Gastrocnemius medialis (tissue), 4 donors: ENCODE measurements at regions of chr18 and their contacts with region 1.

Region 1: GRCh38 chr18:61901323-61901986 is 8.6 kb upstream of the RNF152 start:
- DNase-seq: no peak
- ATAC-seq: peak; percentile 56 to 80
- H3K4me3 ChIP-seq: no peak overlapping the region
- H3K27ac ChIP-seq: no peak overlapping the region
- H3K4me1 ChIP-seq: no peaks in the 10 kb centered on the region
- H3K27me3 ChIP-seq: no peaks in the 10 kb centered on the region
- CTCF ChIP-seq: peak; percentile 40 to 81 (median 63)
- POLR2A ChIP-seq: no peak

Region 2: DNA sequence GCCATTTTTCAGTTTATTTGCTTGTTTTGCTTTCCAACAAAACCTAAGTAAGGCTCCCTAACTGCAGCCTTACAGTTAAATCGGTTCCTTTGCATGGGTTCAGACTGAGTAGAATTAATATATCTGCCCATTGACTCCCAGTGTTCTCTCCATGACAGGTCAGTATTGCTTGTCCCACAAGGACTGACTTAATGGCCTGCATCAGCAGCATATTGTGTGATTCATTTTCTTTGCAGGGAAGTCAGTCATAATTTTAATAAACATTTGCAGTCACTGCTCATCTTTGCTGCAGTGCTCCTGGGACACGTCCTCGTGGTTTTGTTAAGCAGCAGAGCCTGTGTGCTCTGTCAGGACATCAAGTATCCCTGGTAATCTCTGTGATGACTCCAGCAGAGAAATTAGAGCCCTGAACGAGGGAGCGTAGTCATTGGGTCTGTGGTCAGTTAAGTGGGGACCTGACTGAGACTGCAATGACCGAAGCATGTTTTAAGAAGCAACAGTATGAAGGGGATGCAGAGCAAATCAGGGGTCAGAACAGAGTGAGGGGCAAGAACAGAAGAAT is 474.9 kb before region 1 on chr18:
- in situ Hi-C with region 1: no loop called
- intact Hi-C with region 1: no loop called
- DNase-seq: no peak
- ATAC-seq: no peak
- H3K4me3 ChIP-seq: no peak overlapping the region
- H3K27ac ChIP-seq: no peak overlapping the region
- H3K4me1 ChIP-seq: no peaks in the 10 kb centered on the region
- H3K27me3 ChIP-seq: no peaks in the 10 kb centered on the region
- CTCF ChIP-seq: no peak
- POLR2A ChIP-seq: no peak

Region 3: GRCh38 chr18:61635901-61636528 is 265.4 kb before region 1 on chr18:
- in situ Hi-C with region 1: loop called in 2 of 4 experiments (anchors 10 to 25 kb)
- intact Hi-C with region 1: no loop called
- DNase-seq: peak in 1 of 2 donors; percentile 13
- ATAC-seq: peak in 1 of 2 donors; percentile 36
- H3K4me3 ChIP-seq: no peak overlapping the region
- H3K27ac ChIP-seq: peak overlapping the region in 2 of 4 donors; percentile 55 to 58
- H3K4me1 ChIP-seq: peaks cover 0 to 5% of the 10 kb centered on the region in 2 donors
- H3K27me3 ChIP-seq: no peaks in the 10 kb centered on the region
- CTCF ChIP-seq: peak; percentile 30 to 73 (median 54)
- POLR2A ChIP-seq: no peak